Panc1 (cell line): ENCODE measurements at regions of chr20 and their contacts with region 1.

Region 1: DNA sequence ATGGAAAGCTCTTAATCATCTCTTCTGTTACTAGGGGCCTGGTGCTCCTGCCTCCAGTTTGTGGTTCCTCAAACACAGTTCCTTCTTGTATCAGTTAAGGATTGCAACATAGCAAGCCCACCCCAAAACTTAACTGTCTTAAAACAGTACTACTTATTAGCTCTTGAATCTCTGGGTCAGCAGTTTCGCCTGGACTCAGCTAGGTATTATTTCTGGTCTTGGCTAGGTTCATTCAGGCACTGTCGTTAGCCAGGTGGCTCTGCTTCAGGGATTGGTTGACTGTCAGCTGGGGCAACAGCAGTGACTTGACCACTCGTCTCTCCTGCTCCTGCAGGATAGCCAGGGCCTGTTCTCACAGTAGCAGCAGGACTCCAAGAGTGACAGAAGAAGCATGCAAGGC is 30.0 kb upstream of the RALY start:
- DNase-seq: no peak
- ATAC-seq: no peak
- H3K4me3 ChIP-seq: no peak overlapping the region
- H3K27ac ChIP-seq: no peak overlapping the region
- H3K4me1 ChIP-seq: peaks cover 2% of the 10 kb centered on the region; the same call in 1 of the 2 replicates
- H3K27me3 ChIP-seq: no peaks in the 10 kb centered on the region
- CTCF ChIP-seq: no peak

Region 2: DNA sequence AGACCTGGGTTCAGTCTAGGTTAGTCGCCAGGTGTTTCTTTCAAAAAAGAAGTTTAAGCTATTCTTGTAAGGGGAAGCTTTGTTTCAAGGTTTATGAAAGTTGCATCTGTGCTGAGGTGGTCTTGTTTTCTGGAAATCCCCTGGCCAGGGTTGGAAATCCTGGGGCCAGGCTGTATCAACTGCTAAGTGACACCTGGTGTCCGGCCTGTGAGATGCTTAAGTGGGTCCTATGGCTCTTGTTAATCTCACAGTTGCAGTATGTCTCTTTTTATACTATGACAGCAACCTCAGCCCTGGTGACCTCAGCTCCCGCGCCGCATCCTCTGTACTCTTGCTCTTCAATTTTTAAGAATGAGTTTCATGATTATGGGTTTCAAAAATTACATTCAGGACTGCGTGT is 80.6 kb before region 1 on chr20:
- CTCF ChIA-PET with region 1: no interaction called
- POLR2A ChIA-PET with region 1: no interaction called
- in situ Hi-C with region 1: no loop called
- intact Hi-C with region 1: no loop called
- DNase-seq: no peak
- ATAC-seq: no peak
- H3K4me3 ChIP-seq: no peak overlapping the region
- H3K27ac ChIP-seq: no peak overlapping the region
- H3K4me1 ChIP-seq: no peaks in the 10 kb centered on the region
- H3K27me3 ChIP-seq: no peaks in the 10 kb centered on the region
- CTCF ChIP-seq: no peak

Region 3: DNA sequence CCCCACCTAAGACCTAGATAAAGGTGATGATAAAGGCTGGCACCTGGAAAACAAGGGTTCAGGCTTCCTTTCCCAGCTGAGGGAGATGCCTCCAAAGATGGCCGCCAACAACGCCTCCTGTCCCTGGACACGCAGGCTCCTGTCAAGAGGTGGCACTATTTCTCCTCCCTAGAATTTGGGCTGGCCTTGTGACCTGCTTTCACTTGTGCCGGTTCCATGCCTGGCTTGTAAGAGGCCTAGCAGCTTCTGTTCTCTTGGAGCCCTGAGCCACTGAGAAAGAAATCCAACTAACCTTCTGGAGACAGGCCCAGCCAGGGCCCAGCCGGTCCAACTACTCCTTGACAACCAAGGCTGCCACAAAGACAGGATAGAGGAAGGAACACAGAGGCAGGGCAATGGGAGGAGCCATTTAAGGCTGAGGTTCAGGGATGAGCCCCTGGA is 30.3 kb before region 1 on chr20:
- CTCF ChIA-PET with region 1: no interaction called
- POLR2A ChIA-PET with region 1: no interaction called
- in situ Hi-C with region 1: no loop called
- intact Hi-C with region 1: no loop called
- DNase-seq: peak; percentile 13
- ATAC-seq: peak; percentile 89
- H3K4me3 ChIP-seq: no peak overlapping the region
- H3K27ac ChIP-seq: no peak overlapping the region
- H3K4me1 ChIP-seq: no peaks in the 10 kb centered on the region
- H3K27me3 ChIP-seq: no peaks in the 10 kb centered on the region; the same call in 1 of the 2 replicates
- CTCF ChIP-seq: no peak; the same call in 1 of the 2 replicates

Region 4: GRCh38 chr20:33951171-33951570 is 12.6 kb before region 1 on chr20:
- CTCF ChIA-PET with region 1: interaction called, 11 read pairs
- POLR2A ChIA-PET with region 1: no interaction called
- in situ Hi-C with region 1: no loop called
- intact Hi-C with region 1: no loop called
- DNase-seq: no peak
- ATAC-seq: no peak
- H3K4me3 ChIP-seq: no peak overlapping the region
- H3K27ac ChIP-seq: no peak overlapping the region
- H3K4me1 ChIP-seq: no peaks in the 10 kb centered on the region
- H3K27me3 ChIP-seq: no peaks in the 10 kb centered on the region
- CTCF ChIP-seq: no peak